HCT116 (cell line): ENCODE measurements at regions of chr1 and their contacts with region 1.

Region 1: DNA sequence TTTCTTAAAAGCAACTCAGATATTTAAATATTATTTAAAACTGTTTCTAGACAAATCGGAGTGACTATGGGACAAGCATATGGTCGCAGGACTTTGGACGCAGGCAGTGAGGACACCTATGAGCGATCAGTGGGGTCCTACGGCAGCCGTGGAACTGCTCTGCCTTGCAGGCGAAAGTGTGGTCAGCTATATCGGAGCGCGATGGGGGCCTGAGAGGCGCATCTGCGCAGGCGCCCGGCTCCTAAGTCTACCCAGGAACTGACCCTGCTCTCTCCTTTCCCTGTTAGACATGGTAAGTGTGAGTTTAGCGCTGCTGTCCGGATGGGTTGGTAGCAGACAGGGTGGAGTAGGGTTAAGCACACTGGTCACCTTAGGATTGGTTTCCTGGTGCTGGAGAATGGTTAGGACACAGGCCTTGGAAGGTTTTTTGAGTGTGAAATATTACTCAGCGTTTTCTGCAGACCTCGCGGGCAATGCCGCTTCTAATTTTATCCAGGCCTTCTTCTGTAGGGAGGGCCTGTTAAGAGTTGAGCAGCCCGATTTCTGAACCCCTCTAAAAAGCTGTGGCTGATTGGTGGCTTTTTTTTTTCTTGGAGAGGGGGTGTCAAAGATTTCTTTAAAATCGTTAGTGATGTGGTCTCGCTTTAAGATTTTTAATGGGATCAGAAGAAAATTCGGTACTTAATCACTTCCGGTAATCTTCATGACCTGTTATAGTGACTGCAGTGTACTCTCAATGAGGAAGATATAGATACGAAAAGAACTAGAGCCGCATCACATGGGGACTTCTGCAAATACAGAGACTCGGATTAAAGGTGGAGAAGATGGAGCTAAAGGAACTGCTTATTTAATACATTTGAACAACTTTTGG is at the start of gene RABGGTB:
- DNase-seq: peak; percentile 94
- ATAC-seq: peak; percentile 74
- H3K4me3 ChIP-seq: peak within 1 kb of the TSS; percentile 67 to 78
- H3K27ac ChIP-seq: peak within 1 kb of the TSS; percentile 97
- H3K4me1 ChIP-seq: peaks cover 7 to 49% of the 10 kb centered on the region in 2 experiments; a peak in 3 of 4 replicates
- H3K27me3 ChIP-seq: no peaks in the 10 kb centered on the region
- CTCF ChIP-seq: no peak
- POLR2A ChIP-seq: peak; percentile 97
- RAD21 ChIP-seq: no peak; the same call in 1 of the 2 replicates
- total RNA-seq, gene RABGGTB: 203 TPM

Region 2: GRCh38 chr1:75632350-75632949 is 153.8 kb before region 1 on chr1:
- CTCF ChIA-PET with region 1: no interaction called
- POLR2A ChIA-PET with region 1: no interaction called
- RAD21 ChIA-PET with region 1: no interaction called
- intact Hi-C with region 1: loop called (anchors 5 kb)
- DNase-seq: peak; percentile 13
- ATAC-seq: peak; percentile 79
- H3K4me3 ChIP-seq: no peak overlapping the region
- H3K27ac ChIP-seq: no peak overlapping the region
- H3K4me1 ChIP-seq: no peaks in the 10 kb centered on the region
- H3K27me3 ChIP-seq: no peaks in the 10 kb centered on the region
- CTCF ChIP-seq: peak; percentile 63 to 72 (median 64)
- POLR2A ChIP-seq: no peak
- RAD21 ChIP-seq: peak; percentile 74

Region 3: DNA sequence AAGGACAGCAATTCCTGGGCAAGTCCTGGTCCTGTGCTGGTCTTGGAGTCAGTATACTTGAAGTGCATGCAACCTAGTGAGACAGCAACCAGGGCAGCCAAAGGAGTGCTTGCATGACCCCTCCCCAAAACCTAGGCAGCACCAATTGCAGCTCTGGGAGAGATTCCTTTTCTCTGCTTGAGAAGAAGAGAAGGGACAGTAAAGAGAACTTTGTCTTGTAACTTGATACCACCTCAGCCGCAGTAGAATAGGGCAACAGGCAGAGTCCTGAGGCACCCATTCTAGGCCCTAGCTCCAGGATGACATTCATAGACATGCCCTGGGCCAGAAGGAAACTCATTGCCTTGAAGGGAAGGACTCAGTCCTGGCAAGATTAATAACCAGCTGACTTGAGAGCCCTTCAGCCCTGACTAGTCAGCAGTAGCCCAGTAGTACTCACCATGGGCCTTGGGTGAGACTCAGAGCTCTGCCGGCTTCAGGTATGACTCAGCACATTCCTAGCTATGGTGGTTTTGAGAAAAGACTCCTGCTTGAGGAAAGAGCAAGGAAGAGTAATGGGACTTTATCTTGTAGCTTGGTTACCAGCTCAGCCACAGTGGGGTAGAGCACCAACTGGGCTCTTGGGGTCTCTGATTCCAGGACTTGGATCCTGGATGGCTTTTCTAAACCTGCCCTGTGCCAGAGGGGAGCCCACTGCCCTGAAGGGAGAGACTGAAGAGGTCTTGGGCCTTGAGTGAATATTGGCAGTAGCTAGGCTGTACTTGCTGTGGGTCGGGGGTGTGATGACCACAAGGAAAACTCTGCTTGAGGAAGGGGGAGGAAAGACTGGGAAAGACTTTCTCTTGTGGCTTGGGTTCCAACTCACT is 113.5 kb before region 1 on chr1:
- CTCF ChIA-PET with region 1: no interaction called
- POLR2A ChIA-PET with region 1: interaction called, 4 read pairs
- RAD21 ChIA-PET with region 1: no interaction called
- intact Hi-C with region 1: loop called (anchors 2 kb)
- DNase-seq: peak; percentile 55
- ATAC-seq: peak; percentile 92
- H3K4me3 ChIP-seq: peak overlapping the region in 1 of 2 experiments; percentile 17; a peak in 1 of 4 replicates
- H3K27ac ChIP-seq: peak overlapping the region; percentile 55
- H3K4me1 ChIP-seq: peaks cover 9 to 18% of the 10 kb centered on the region in 2 experiments
- H3K27me3 ChIP-seq: no peaks in the 10 kb centered on the region
- CTCF ChIP-seq: no peak
- POLR2A ChIP-seq: no peak
- RAD21 ChIP-seq: no peak

Region 4: GRCh38 chr1:75724472-75725022 is 61.7 kb before region 1 on chr1 and contains the start of gene ACADM:
- CTCF ChIA-PET with region 1: no interaction called
- POLR2A ChIA-PET with region 1: interaction called, 5 read pairs
- RAD21 ChIA-PET with region 1: no interaction called
- intact Hi-C with region 1: loop called (anchors 1 kb)
- DNase-seq: peak; percentile 60
- ATAC-seq: peak; percentile 96
- H3K4me3 ChIP-seq: peak within 1 kb of the TSS; percentile 85 to 88
- H3K27ac ChIP-seq: peak within 1 kb of the TSS; percentile 47
- H3K4me1 ChIP-seq: peaks cover 12 to 25% of the 10 kb centered on the region in 2 experiments
- H3K27me3 ChIP-seq: no peaks in the 10 kb centered on the region
- CTCF ChIP-seq: no peak
- POLR2A ChIP-seq: no peak
- RAD21 ChIP-seq: no peak
- total RNA-seq, gene ACADM: 48.7 TPM

Region 5: DNA sequence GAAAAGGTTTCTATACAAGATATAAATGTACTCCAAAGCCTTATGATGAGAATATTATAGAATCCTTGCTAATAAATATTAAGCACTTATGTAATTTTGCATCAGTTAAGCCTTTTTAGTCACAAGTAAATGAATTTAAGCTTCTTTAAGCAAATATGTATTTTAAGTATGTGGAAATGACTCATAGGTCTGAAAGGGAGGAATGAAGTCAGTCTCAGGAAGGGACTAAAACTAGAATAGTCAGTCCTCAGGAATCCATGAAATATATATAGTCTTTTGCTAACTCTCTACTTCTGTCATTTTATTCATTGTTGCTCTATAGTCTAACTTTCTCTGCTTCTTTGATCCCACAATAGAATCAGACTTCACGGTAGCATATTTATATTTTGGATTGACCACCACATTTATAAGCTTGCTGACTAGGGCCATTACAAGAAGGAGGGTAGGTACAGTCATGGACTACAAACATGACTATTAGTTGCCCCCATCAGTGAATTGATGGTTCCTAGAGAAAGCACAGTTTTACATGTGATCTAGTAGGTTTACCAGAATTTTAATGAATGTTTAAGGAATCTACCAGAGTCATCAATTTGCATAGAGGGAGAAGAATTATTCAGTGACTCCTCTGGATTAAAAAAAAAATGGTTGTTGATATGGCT is 20.4 kb before region 1 on chr1:
- CTCF ChIA-PET with region 1: no interaction called
- POLR2A ChIA-PET with region 1: interaction called, 18 read pairs
- RAD21 ChIA-PET with region 1: no interaction called
- intact Hi-C with region 1: no loop called
- DNase-seq: no peak
- ATAC-seq: peak; percentile 81
- H3K4me3 ChIP-seq: peak overlapping the region in 1 of 2 experiments; percentile 42; a peak in 2 of 4 replicates
- H3K27ac ChIP-seq: peak overlapping the region; percentile 66; the same call in 1 of the 2 replicates
- H3K4me1 ChIP-seq: peaks cover 14 to 40% of the 10 kb centered on the region in 2 experiments
- H3K27me3 ChIP-seq: no peaks in the 10 kb centered on the region
- CTCF ChIP-seq: no peak
- POLR2A ChIP-seq: no peak
- RAD21 ChIP-seq: no peak

Region 6: GRCh38 chr1:75771978-75772377 is 14.2 kb before region 1 on chr1:
- CTCF ChIA-PET with region 1: no interaction called
- POLR2A ChIA-PET with region 1: interaction called, 20 read pairs
- RAD21 ChIA-PET with region 1: no interaction called
- intact Hi-C with region 1: no loop called
- DNase-seq: no peak
- ATAC-seq: no peak
- H3K4me3 ChIP-seq: no peak overlapping the region
- H3K27ac ChIP-seq: no peak overlapping the region
- H3K4me1 ChIP-seq: peaks cover 11 to 24% of the 10 kb centered on the region in 2 experiments
- H3K27me3 ChIP-seq: no peaks in the 10 kb centered on the region
- CTCF ChIP-seq: no peak
- POLR2A ChIP-seq: no peak
- RAD21 ChIP-seq: no peak

Region 7: GRCh38 chr1:75796376-75797272 is 10.4 kb after region 1 on chr1 and contains the start of gene MSH4:
- CTCF ChIA-PET with region 1: no interaction called
- POLR2A ChIA-PET with region 1: interaction called, 10 read pairs
- RAD21 ChIA-PET with region 1: no interaction called
- intact Hi-C with region 1: no loop called
- DNase-seq: no peak
- ATAC-seq: peak; percentile 41
- H3K4me3 ChIP-seq: no peak within 1 kb of the TSS
- H3K27ac ChIP-seq: no peak within 1 kb of the TSS
- H3K4me1 ChIP-seq: no peaks in the 10 kb centered on the region
- H3K27me3 ChIP-seq: no peaks in the 10 kb centered on the region
- CTCF ChIP-seq: no peak
- POLR2A ChIP-seq: no peak
- RAD21 ChIP-seq: no peak
- total RNA-seq, gene MSH4: 1.7 TPM

Region 8: DNA sequence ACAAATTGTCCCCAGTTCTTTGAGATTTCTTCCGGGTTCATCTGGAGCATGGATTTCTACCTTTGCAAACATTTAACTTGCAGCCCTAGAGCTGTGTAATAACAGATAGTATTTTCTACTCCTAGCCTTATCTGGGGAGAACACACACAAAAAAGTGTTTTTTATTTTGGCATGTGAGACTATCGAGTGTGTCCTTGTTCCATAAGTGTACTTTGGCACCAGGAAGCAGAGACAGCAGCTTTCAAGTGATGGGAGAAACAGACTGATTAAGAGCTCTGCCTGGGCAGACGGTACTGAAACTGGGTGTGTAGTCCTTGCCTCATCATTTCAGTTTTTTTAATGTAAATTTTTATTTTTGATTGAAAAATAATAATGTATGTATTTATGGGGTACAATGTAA is 585.7 kb after region 1 on chr1:
- CTCF ChIA-PET with region 1: no interaction called
- POLR2A ChIA-PET with region 1: no interaction called
- RAD21 ChIA-PET with region 1: no interaction called
- intact Hi-C with region 1: no loop called
- DNase-seq: no peak
- ATAC-seq: no peak
- H3K4me3 ChIP-seq: no peak overlapping the region
- H3K27ac ChIP-seq: no peak overlapping the region
- H3K4me1 ChIP-seq: no peaks in the 10 kb centered on the region
- H3K27me3 ChIP-seq: no peaks in the 10 kb centered on the region
- CTCF ChIP-seq: no peak
- POLR2A ChIP-seq: no peak
- RAD21 ChIP-seq: no peak